ENCODE measurements at regions of chr1 and their contacts with region 1.

Region 1: DNA sequence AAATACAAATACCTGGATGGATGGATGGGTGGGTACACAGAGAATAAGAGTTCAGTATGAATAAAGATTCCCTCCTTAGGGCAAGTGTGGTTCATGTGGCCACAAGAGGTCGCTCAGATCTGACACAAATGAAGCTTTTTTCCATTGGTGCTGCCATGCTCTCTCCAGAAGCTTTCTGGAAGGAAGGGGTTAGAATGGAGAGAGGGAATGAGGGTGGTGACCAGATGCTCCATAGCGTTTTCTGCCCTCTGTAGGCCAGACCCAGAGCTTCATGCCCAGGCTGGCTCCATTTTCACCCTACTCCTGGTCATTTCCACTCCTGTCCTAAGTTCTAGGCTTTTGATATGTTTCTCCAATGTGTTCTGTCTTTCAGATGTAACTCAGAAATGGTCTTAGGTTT is 3.3 kb upstream of the FCRL6 start:
- DNase-seq: peak; percentile 35 to 67
- ATAC-seq: peak; percentile 82 to 95 (median 90)
- H3K4me3 ChIP-seq: no peak overlapping the region
- H3K27ac ChIP-seq: no peak overlapping the region
- H3K4me1 ChIP-seq: no peaks in the 10 kb centered on the region
- H3K27me3 ChIP-seq: peaks cover 0 to 21% (median 5%) of the 10 kb centered on the region in 3 donors
- CTCF ChIP-seq: peak; percentile 79

Region 2: GRCh38 chr1:159854693-159855192 is 55.9 kb after region 1 on chr1:
- intact Hi-C with region 1: loop called in 1 of 2 experiments (anchors 5 kb)
- DNase-seq: peak; percentile 86 to 92
- ATAC-seq: peak; percentile 93 to 98 (median 95)
- H3K4me3 ChIP-seq: peak overlapping the region; percentile 81
- H3K27ac ChIP-seq: peak overlapping the region; percentile 83
- H3K4me1 ChIP-seq: peaks cover 9% of the 10 kb centered on the region
- H3K27me3 ChIP-seq: peaks cover 0 to 1% (median 0%) of the 10 kb centered on the region in 3 donors
- CTCF ChIP-seq: peak; percentile 20

Region 3: GRCh38 chr1:159891275-159892157 is 92.6 kb after region 1 on chr1:
- intact Hi-C with region 1: loop called (anchors 1 to 2 kb)
- DNase-seq: peak; percentile 79 to 88
- ATAC-seq: peak; percentile 97 to 99 (median 98)
- H3K4me3 ChIP-seq: no peak overlapping the region
- H3K27ac ChIP-seq: no peak overlapping the region
- H3K4me1 ChIP-seq: peaks cover 5% of the 10 kb centered on the region
- H3K27me3 ChIP-seq: no peaks in the 10 kb centered on the region
- CTCF ChIP-seq: peak; percentile 97

Region 4: DNA sequence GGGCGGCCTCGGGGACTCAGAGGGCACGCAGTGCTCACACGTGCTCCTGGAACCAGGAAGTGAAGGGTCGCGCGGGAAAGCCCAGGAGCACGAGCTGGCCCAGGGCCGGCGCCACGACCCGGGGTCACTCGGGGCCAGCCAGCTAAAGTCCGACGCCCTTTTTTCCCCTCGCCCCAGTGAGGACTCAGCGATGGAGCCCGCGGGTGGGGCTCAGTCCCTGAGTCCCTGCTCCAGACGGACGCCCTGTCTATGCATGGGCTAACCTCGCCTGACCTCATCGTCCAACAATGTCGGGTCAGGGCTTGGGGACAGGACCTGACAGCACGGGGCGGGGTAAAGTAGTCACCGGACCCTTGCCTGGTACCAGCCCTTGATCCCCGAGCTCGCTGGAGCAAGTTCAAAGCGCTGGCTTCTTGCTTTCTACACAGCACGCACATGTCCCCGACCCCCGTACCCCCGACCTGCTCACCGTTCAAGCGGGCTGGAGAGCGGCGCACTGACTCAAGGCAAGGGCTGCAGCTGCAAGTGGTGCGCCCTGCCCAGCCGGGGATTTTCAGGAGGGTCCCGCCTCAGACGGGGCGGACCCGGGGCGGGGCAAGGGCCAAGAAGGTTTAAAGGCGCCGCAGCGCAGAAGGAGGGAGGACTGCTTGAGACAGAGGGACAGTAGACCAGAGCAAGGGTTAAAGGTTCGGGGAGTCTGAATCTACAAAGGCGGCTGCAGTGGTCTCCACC is 126.3 kb after region 1 on chr1 and contains the start of gene TAGLN2:
- intact Hi-C with region 1: no loop called
- DNase-seq: peak; percentile 92 to 93
- ATAC-seq: peak; percentile 64 to 79 (median 74)
- H3K4me3 ChIP-seq: peak within 1 kb of the TSS; percentile 82
- H3K27ac ChIP-seq: peak within 1 kb of the TSS; percentile 84
- H3K4me1 ChIP-seq: peaks cover 15% of the 10 kb centered on the region
- H3K27me3 ChIP-seq: peaks cover 0 to 30% (median 3%) of the 10 kb centered on the region in 3 donors
- CTCF ChIP-seq: no peak
- total RNA-seq, gene TAGLN2: 42.8 to 61.3 (median 45.6) TPM

Region 5: GRCh38 chr1:160006312-160006940 is 207.5 kb after region 1 on chr1:
- intact Hi-C with region 1: loop called (anchors 5 kb)
- DNase-seq: peak; percentile 58 to 67
- ATAC-seq: peak in 2 of 4 donors; percentile 59 to 60
- H3K4me3 ChIP-seq: no peak overlapping the region
- H3K27ac ChIP-seq: no peak overlapping the region
- H3K4me1 ChIP-seq: no peaks in the 10 kb centered on the region
- H3K27me3 ChIP-seq: no peaks in the 10 kb centered on the region
- CTCF ChIP-seq: peak; percentile 62

Measured in psoas muscle (tissue), 8 donors.